Heart right ventricle (tissue), 16 donors: ENCODE measurements at regions of chr19 and their contacts with region 1.

Region 1: GRCh38 chr19:44689056-44689895 is 9.7 kb upstream of the CEACAM16 start:
- DNase-seq: peak; percentile 76 to 83
- ATAC-seq: peak; percentile 36 to 72 (median 53)
- H3K4me3 ChIP-seq: no peak overlapping the region
- H3K27ac ChIP-seq: peak overlapping the region in 1 of 10 donors; percentile 3
- H3K4me1 ChIP-seq: peaks cover 0 to 74% (median 35%) of the 10 kb centered on the region in 9 donors
- H3K27me3 ChIP-seq: no peaks in the 10 kb centered on the region
- CTCF ChIP-seq: peak; percentile 88 to 97 (median 94)

Region 2: DNA sequence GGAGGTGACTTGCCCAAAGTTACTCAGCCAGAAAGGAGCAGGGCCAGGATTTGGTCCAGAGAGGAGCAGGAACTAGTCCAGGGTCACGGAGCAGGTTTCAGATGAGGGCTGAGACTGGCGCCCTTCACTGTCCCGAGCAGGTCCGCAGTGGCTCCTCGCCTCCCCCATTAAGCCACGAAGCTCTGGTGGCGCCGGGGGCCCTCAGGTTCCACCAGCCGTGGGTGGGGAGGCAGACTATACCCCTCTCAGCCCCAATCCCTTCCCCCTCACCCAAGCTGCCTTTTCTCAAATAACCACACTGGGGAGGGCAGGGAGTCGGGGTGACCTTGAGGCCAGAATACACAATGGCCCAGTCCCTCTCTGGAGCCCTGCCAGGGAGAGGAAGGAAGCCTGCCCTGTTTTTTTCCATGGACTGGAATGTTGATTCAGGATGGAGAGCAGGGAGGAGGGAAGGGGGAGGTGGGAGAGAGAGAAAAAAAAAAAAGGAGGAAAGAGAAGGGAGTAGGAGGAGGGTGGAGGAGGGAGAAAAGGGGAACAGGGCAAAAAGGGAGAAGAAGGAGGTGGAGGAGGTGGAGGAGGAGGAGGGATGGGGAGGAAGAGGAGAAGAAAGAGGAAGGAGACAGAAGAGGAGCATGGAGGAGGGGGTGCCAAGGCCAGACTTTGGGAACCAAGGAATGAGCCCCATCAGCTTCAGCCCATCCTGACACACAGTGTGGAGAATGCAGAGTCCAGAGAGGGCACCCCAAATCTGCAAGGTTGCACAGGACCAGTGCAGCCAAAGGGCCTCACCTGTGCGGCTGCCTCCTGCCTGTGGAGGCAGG is 29.4 kb after region 1 on chr19:
- intact Hi-C with region 1: loop called in 8 of 10 experiments (anchors 1 to 5 kb)
- DNase-seq: peak; percentile 75 to 89
- ATAC-seq: peak; percentile 81 to 91 (median 85)
- H3K4me3 ChIP-seq: peak overlapping the region in 9 of 10 donors; percentile 13 to 44 (median 34)
- H3K27ac ChIP-seq: peak overlapping the region; percentile 68 to 93 (median 84)
- H3K4me1 ChIP-seq: peaks cover 12 to 58% (median 48%) of the 10 kb centered on the region in 9 donors
- H3K27me3 ChIP-seq: no peaks in the 10 kb centered on the region
- CTCF ChIP-seq: no peak

Region 3: DNA sequence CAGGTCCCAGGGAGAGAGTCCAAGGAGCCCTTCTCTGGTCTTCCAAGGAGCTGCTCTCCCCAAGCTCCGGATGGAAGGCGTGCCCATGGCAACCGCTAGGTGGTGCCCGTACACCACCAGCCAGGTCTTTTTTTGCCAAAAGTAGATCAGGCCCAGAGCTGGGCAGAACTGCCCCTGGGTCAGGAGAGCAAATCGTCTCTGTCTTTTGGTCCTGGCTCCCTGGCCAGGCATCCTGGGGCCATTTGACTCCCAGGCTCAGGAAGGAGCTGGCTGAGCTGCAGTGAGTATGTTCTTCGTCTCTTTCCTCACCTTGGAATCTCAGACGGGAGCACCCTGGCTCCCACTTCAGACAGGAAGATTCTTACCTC is 34.7 kb after region 1 on chr19:
- intact Hi-C with region 1: loop called in 8 of 10 experiments (anchors 2 to 5 kb)
- DNase-seq: peak; percentile 83 to 84
- ATAC-seq: peak; percentile 89 to 94 (median 90)
- H3K4me3 ChIP-seq: no peak overlapping the region
- H3K27ac ChIP-seq: peak overlapping the region in 9 of 10 donors; percentile 0 to 60 (median 28)
- H3K4me1 ChIP-seq: peaks cover 12 to 65% (median 48%) of the 10 kb centered on the region in 9 donors
- H3K27me3 ChIP-seq: no peaks in the 10 kb centered on the region
- CTCF ChIP-seq: peak; percentile 94 to 100 (median 99)

Region 4: GRCh38 chr19:44770550-44771257 is 81.4 kb after region 1 on chr19:
- intact Hi-C with region 1: loop called in 7 of 10 experiments (anchors 1 to 5 kb)
- DNase-seq: peak; percentile 88 to 91
- ATAC-seq: peak; percentile 94 to 99 (median 97)
- H3K4me3 ChIP-seq: peak overlapping the region in 1 of 10 donors; percentile 10
- H3K27ac ChIP-seq: peak overlapping the region in 1 of 10 donors; percentile 72
- H3K4me1 ChIP-seq: peaks cover 0 to 41% (median 0%) of the 10 kb centered on the region in 9 donors
- H3K27me3 ChIP-seq: peaks cover 0 to 7% (median 0%) of the 10 kb centered on the region in 7 donors
- CTCF ChIP-seq: peak; percentile 82 to 95 (median 88)

Region 5: GRCh38 chr19:44820648-44821609 is 131.7 kb after region 1 on chr19:
- intact Hi-C with region 1: no loop called
- DNase-seq: peak; percentile 80 to 88
- ATAC-seq: peak; percentile 75 to 93 (median 88)
- H3K4me3 ChIP-seq: peak overlapping the region in 7 of 10 donors; percentile 9 to 40 (median 35)
- H3K27ac ChIP-seq: peak overlapping the region; percentile 50 to 92 (median 84)
- H3K4me1 ChIP-seq: peaks cover 0 to 39% (median 22%) of the 10 kb centered on the region in 9 donors
- H3K27me3 ChIP-seq: no peaks in the 10 kb centered on the region
- CTCF ChIP-seq: no peak

Region 6: DNA sequence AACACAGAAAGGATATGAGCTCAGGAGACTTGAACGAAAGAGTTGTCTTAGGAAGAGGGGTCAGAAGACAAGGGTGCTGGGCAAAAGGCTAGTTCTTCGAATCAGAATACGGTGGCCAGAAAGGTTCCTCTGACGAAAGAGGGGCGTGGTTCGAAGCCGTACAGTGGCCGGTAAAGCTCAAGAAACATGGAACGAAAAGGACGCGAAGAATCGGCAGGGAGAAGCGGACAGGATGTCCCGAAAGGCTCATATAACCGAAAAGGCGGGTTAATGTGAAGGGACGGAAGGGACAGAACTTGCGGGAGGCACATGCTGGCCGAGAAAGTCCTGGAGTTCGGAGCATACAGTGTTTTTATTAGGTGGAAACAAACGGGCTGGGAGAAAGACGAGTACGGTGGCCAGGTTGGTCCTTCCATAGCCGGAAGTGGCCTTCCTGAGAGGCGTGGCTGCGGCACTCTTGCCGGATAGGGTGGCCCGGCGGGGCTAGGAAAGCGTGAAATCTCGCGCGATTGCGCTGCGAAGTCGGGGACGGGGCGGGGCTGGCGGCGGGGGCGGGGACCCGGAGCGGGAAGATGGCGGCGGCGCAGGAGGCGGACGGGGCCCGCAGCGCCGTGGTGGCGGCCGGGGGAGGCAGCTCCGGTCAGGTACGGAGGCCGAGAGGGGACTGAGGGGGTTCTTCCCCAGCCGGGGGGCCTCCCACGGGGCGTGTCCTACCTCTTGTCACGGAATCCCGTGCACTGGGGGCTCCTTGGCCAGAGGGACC is 265.7 kb after region 1 on chr19 and contains the start of gene CLPTM1:
- intact Hi-C with region 1: loop called in 1 of 10 experiments (anchors 10 kb)
- DNase-seq: peak; percentile 97 to 98
- ATAC-seq: peak; percentile 95 to 98 (median 97)
- H3K4me3 ChIP-seq: peak within 1 kb of the TSS; percentile 85 to 100 (median 96)
- H3K27ac ChIP-seq: peak within 1 kb of the TSS; percentile 84 to 97 (median 91)
- H3K4me1 ChIP-seq: peaks cover 21 to 74% (median 45%) of the 10 kb centered on the region in 9 donors
- H3K27me3 ChIP-seq: no peaks in the 10 kb centered on the region
- CTCF ChIP-seq: peak in 1 of 9 donors; percentile 13
- total RNA-seq, gene CLPTM1: 81.1 to 130 (median 95.7) TPM